CD8-positive, alpha-beta T cell (primary cell): ENCODE measurements at regions of chr5 and their contacts with region 1.

Region 1: GRCh38 chr5:67989456-67989855 is 226.1 kb upstream of the PIK3R1 start:
- DNase-seq: no peak
- ATAC-seq: no peak
- H3K4me3 ChIP-seq: no peak overlapping the region
- H3K4me3 Mint-ChIP-seq: no peak overlapping the region
- H3K27ac ChIP-seq: no peak overlapping the region
- H3K27ac Mint-ChIP-seq: no peak overlapping the region
- H3K4me1 ChIP-seq: no peaks in the 10 kb centered on the region
- H3K4me1 Mint-ChIP-seq: no peaks in the 10 kb centered on the region
- H3K27me3 ChIP-seq: no peaks in the 10 kb centered on the region
- H3K27me3 Mint-ChIP-seq: no peaks in the 10 kb centered on the region
- CTCF ChIP-seq: no peak

Region 2: GRCh38 chr5:66440202-66440680 is 1549.2 kb before region 1 on chr5:
- CTCF ChIA-PET with region 1: no interaction called
- POLR2A ChIA-PET with region 1: no interaction called
- intact Hi-C with region 1: loop called in 1 of 2 experiments (anchors 5 kb)
- DNase-seq: no peak
- ATAC-seq: no peak
- H3K4me3 ChIP-seq: no peak overlapping the region
- H3K4me3 Mint-ChIP-seq: no peak overlapping the region
- H3K27ac ChIP-seq: no peak overlapping the region
- H3K27ac Mint-ChIP-seq: no peak overlapping the region
- H3K4me1 ChIP-seq: no peaks in the 10 kb centered on the region
- H3K4me1 Mint-ChIP-seq: no peaks in the 10 kb centered on the region
- H3K27me3 ChIP-seq: no peaks in the 10 kb centered on the region
- H3K27me3 Mint-ChIP-seq: no peaks in the 10 kb centered on the region
- CTCF ChIP-seq: no peak

Region 3: DNA sequence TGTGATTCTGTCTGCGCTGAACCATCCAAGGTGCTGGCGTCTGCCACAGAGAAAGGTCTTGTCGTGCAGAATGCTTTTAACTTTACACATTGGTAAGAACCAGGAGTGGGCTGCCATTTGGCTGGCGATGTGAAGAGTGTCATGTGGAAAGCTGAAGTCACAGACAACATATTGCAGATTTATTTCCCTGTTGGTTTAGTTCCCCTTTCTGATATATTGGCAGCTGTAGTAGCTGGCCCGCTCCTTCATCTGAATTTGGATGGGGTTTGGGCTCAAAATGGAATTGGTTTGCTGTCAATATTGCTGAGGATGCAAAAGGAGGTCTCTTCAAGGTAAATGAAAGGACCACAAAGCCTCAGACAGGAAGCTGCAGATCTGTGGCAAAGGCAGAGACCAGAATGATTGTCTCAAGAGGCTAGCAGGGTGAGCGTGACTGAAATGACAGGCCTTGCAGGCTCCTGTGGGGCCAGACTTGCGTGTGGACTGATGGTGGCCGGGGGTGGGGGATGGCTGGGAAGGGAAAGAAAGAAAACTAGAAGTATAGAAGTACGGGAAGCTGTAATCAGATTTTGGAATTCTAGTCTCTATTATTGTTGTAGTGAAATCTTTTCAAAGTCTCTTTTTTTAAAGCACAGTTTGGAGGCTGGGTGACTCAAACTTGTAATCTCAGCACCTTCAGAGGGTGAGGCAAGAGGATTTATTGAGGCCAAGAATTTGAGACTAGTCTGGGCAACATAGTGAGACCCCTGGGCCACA is 767.8 kb before region 1 on chr5:
- CTCF ChIA-PET with region 1: no interaction called
- POLR2A ChIA-PET with region 1: no interaction called
- intact Hi-C with region 1: no loop called
- DNase-seq: peak in 7 of 9 experiments; percentile 26 to 74 (median 52)
- ATAC-seq: peak; percentile 73
- H3K4me3 ChIP-seq: peak overlapping the region in 1 of 2 experiments; percentile 10
- H3K4me3 Mint-ChIP-seq: peak overlapping the region; percentile 71
- H3K27ac ChIP-seq: peak overlapping the region in 1 of 2 experiments; percentile 39
- H3K27ac Mint-ChIP-seq: peak overlapping the region; percentile 94
- H3K4me1 ChIP-seq: peaks cover 42% of the 10 kb centered on the region
- H3K4me1 Mint-ChIP-seq: peaks cover 61% of the 10 kb centered on the region
- H3K27me3 ChIP-seq: no peaks in the 10 kb centered on the region
- H3K27me3 Mint-ChIP-seq: no peaks in the 10 kb centered on the region
- CTCF ChIP-seq: no peak

Region 4: GRCh38 chr5:67900514-67900913 is 88.9 kb before region 1 on chr5:
- CTCF ChIA-PET with region 1: no interaction called
- POLR2A ChIA-PET with region 1: no interaction called
- intact Hi-C with region 1: no loop called
- DNase-seq: no peak
- ATAC-seq: no peak
- H3K4me3 ChIP-seq: no peak overlapping the region
- H3K4me3 Mint-ChIP-seq: no peak overlapping the region
- H3K27ac ChIP-seq: no peak overlapping the region
- H3K27ac Mint-ChIP-seq: no peak overlapping the region
- H3K4me1 ChIP-seq: no peaks in the 10 kb centered on the region
- H3K4me1 Mint-ChIP-seq: no peaks in the 10 kb centered on the region
- H3K27me3 ChIP-seq: no peaks in the 10 kb centered on the region
- H3K27me3 Mint-ChIP-seq: no peaks in the 10 kb centered on the region
- CTCF ChIP-seq: no peak